ENCODE measurements at regions of chr3 and their contacts with region 1.

Region 1: DNA sequence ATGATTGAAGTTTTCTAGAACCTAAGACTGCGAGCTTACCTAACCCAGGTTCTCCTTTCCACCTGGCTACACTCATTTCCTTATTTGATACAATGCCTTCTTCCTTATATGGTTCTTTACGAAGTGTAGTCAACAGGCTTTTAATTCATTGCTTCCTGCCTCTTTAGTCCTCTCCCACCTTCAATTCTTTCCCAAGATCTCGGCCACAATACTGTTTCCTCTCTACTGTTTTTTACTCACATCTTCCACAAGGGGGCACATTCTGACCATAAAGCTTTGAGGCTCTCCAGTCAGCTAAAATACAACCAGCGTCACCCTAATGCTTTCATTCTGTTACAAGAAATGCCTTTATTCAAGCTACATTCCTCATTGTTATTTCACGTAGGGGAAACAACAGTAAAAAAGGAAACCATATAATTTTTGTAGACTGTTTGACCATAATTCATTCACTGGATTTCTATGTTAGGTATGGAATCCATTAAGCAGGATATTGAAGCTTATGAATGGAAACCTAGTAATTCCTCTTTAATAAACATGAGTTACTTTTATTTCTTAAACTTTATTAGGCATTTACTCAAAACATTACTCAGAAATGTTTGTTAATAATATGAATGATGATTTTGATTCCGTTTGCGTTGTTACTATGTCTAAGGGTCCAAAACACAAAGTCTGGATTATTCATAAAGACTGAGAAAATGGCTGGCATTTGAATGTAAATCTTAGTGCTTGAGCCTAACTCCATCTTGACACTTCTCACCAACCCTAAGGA is 29.5 kb upstream of the VEPH1 start:
- DNase-seq: peak; percentile 92
- ATAC-seq: peak; percentile 73
- H3K4me3 ChIP-seq: peak overlapping the region; percentile 27; the same call in 1 of the 2 replicates
- H3K27ac ChIP-seq: peak overlapping the region; percentile 86
- H3K4me1 ChIP-seq: peaks cover 25% of the 10 kb centered on the region
- H3K27me3 ChIP-seq: no peaks in the 10 kb centered on the region
- CTCF ChIP-seq: peak; percentile 86
- POLR2A ChIP-seq: no peak
- RAD21 ChIP-seq: peak; percentile 83

Region 2: GRCh38 chr3:157542711-157543500 is 10.2 kb after region 1 on chr3:
- CTCF ChIA-PET with region 1: interaction called, 15 read pairs
- POLR2A ChIA-PET with region 1: interaction called, 5 read pairs
- dilution Hi-C with region 1: no loop called
- in situ Hi-C with region 1: no loop called
- intact Hi-C with region 1: no loop called
- DNase-seq: peak; percentile 45
- ATAC-seq: peak; percentile 85
- H3K4me3 ChIP-seq: peak overlapping the region; percentile 43
- H3K27ac ChIP-seq: no peak overlapping the region
- H3K4me1 ChIP-seq: peaks cover 3% of the 10 kb centered on the region; the same call in 1 of the 2 replicates
- H3K27me3 ChIP-seq: no peaks in the 10 kb centered on the region
- CTCF ChIP-seq: peak; percentile 25; the same call in 1 of the 2 replicates
- POLR2A ChIP-seq: no peak
- RAD21 ChIP-seq: no peak

Region 3: GRCh38 chr3:157606011-157606851 is 73.5 kb after region 1 on chr3:
- CTCF ChIA-PET with region 1: interaction called, 14 read pairs
- POLR2A ChIA-PET with region 1: no interaction called
- dilution Hi-C with region 1: no loop called
- in situ Hi-C with region 1: no loop called
- intact Hi-C with region 1: loop called (anchors 2 kb)
- DNase-seq: peak; percentile 71
- ATAC-seq: peak; percentile 95
- H3K4me3 ChIP-seq: no peak overlapping the region
- H3K27ac ChIP-seq: no peak overlapping the region
- H3K4me1 ChIP-seq: no peaks in the 10 kb centered on the region
- H3K27me3 ChIP-seq: no peaks in the 10 kb centered on the region; the same call in 1 of the 2 replicates
- CTCF ChIP-seq: peak; percentile 71
- POLR2A ChIP-seq: no peak
- RAD21 ChIP-seq: peak; percentile 54

Region 4: GRCh38 chr3:157652366-157652765 is 119.7 kb after region 1 on chr3:
- CTCF ChIA-PET with region 1: no interaction called
- POLR2A ChIA-PET with region 1: no interaction called
- dilution Hi-C with region 1: no loop called
- in situ Hi-C with region 1: no loop called
- intact Hi-C with region 1: no loop called
- DNase-seq: no peak
- ATAC-seq: no peak
- H3K4me3 ChIP-seq: no peak overlapping the region
- H3K27ac ChIP-seq: no peak overlapping the region
- H3K4me1 ChIP-seq: no peaks in the 10 kb centered on the region
- H3K27me3 ChIP-seq: 0 out of 2 replicates have a peak, but pooled peaks cover 1% of the 10 kb centered on the region
- CTCF ChIP-seq: no peak
- POLR2A ChIP-seq: no peak
- RAD21 ChIP-seq: no peak

Region 5: GRCh38 chr3:158097593-158098308 is 565.0 kb after region 1 on chr3:
- CTCF ChIA-PET with region 1: no interaction called
- POLR2A ChIA-PET with region 1: no interaction called
- dilution Hi-C with region 1: no loop called
- in situ Hi-C with region 1: no loop called
- intact Hi-C with region 1: loop called (anchors 5 kb)
- DNase-seq: peak; percentile 57
- ATAC-seq: peak; percentile 71
- H3K4me3 ChIP-seq: peak overlapping the region; percentile 56
- H3K27ac ChIP-seq: no peak overlapping the region
- H3K4me1 ChIP-seq: peaks cover 2% of the 10 kb centered on the region; the same call in 1 of the 2 replicates
- H3K27me3 ChIP-seq: peaks cover 64% of the 10 kb centered on the region
- CTCF ChIP-seq: no peak
- POLR2A ChIP-seq: no peak
- RAD21 ChIP-seq: no peak

Region 6: GRCh38 chr3:158434412-158435038 is 901.8 kb after region 1 on chr3:
- CTCF ChIA-PET with region 1: interaction called, 3 read pairs
- POLR2A ChIA-PET with region 1: no interaction called
- dilution Hi-C with region 1: no loop called
- in situ Hi-C with region 1: no loop called
- intact Hi-C with region 1: loop called (anchors 2 kb)
- DNase-seq: peak; percentile 60
- ATAC-seq: peak; percentile 79
- H3K4me3 ChIP-seq: no peak overlapping the region
- H3K27ac ChIP-seq: no peak overlapping the region
- H3K4me1 ChIP-seq: no peaks in the 10 kb centered on the region
- H3K27me3 ChIP-seq: no peaks in the 10 kb centered on the region
- CTCF ChIP-seq: peak; percentile 78
- POLR2A ChIP-seq: no peak
- RAD21 ChIP-seq: peak; percentile 74

Region 7: GRCh38 chr3:158790901-158791589 is 1258.3 kb after region 1 on chr3:
- CTCF ChIA-PET with region 1: no interaction called
- POLR2A ChIA-PET with region 1: no interaction called
- dilution Hi-C with region 1: no loop called
- in situ Hi-C with region 1: no loop called
- intact Hi-C with region 1: loop called (anchors 10 kb)
- DNase-seq: peak; percentile 86
- ATAC-seq: peak; percentile 36; the same call in 1 of the 2 replicates
- H3K4me3 ChIP-seq: no peak overlapping the region
- H3K27ac ChIP-seq: no peak overlapping the region
- H3K4me1 ChIP-seq: peaks cover 6% of the 10 kb centered on the region
- H3K27me3 ChIP-seq: no peaks in the 10 kb centered on the region
- CTCF ChIP-seq: peak; percentile 95
- POLR2A ChIP-seq: no peak
- RAD21 ChIP-seq: peak; percentile 89

Measured in IMR-90 (cell line).